SK-N-SH (cell line): ENCODE measurements at regions of chr22 and their contacts with region 1.

Region 1: DNA sequence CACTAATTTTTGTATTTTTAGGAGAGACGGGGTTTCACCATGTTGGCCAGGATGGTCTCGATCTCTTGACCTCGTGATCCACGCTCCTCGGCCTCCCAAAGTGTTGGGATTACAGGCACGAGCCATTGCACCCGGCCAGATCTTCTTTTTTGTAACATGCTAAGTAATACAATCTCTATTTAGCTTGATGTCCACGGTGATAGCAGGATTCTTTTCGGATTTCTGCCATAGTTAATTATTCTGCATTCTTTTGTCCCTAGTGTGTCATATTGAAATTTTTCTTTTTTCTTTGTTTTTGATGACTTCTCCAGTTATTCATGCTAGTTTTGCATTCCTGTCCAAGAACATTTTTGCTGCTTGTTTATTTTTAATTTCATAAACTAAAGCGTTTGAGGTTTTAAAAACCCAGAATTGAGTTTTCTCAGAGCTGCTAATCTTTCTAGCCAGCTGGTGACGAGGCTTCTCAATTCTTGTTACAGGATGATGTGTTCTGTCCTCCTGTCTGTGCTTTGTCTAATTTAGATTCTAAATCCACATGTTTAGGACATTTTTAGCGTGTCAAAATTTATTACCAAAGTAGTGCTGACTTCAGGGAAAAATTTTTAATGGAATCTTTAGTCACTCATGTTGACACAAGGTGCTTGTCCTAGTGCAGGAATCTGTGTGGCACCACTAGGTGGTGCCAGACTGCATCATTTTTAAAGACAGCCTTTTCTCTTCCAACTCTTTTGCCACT is 21.8 kb downstream of the NF2 start:
- DNase-seq: peak; percentile 49
- H3K4me3 ChIP-seq: peak overlapping the region in 1 of 2 experiments; percentile 15; a peak in 1 of 4 replicates
- H3K27ac ChIP-seq: peak overlapping the region; percentile 24 to 93; a peak in 3 of 4 replicates
- H3K4me1 ChIP-seq: peaks cover 5 to 59% of the 10 kb centered on the region in 2 experiments; a peak in 3 of 4 replicates
- H3K27me3 ChIP-seq: no peaks in the 10 kb centered on the region
- CTCF ChIP-seq: peak; percentile 96
- EP300 ChIP-seq: no peak
- RAD21 ChIP-seq: peak; percentile 71

Region 2: DNA sequence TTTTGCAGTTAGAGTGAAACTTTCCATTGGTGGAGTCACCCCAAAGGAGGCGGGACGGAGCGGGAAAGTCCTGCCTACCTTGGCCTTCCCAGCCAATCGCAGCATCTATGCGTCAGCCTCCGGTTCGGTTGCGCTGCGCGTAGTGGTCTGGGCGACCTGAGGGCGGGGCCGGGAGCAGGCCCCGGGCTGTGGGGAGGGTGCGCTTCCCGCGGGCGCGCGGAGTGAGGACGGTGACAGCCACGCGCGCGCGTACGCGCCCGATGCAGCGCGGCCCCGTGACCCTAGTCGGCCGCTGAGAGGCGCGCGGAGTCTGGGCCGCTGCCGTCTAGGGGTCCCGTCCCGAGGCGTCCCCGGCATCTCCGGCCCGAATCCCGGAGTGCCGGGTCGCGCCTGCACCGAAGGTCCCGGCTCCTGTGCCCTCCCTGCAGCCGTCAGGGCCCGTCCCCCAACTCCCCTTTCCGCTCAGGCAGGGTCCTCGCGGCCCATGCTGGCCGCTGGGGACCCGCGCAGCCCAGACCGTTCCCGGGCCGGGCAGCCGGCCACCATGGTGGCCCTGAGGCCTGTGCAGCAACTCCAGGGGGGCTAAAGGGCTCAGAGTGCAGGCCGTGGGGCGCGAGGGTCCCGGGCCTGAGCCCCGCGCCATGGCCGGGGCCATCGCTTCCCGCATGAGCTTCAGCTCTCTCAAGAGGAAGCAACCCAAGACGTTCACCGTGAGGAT is 21.7 kb before region 1 on chr22 and contains the start of gene NF2:
- CTCF ChIA-PET with region 1: interaction called, 35 read pairs
- POLR2A ChIA-PET with region 1: no interaction called
- DNase-seq: peak; percentile 99
- H3K4me3 ChIP-seq: peak within 1 kb of the TSS; percentile 75 to 77
- H3K27ac ChIP-seq: peak within 1 kb of the TSS; percentile 73 to 79
- H3K4me1 ChIP-seq: peaks cover 3 to 11% of the 10 kb centered on the region in 2 experiments; a peak in 2 of 4 replicates
- H3K27me3 ChIP-seq: no peaks in the 10 kb centered on the region
- CTCF ChIP-seq: peak; percentile 20; the same call in 1 of the 2 replicates
- EP300 ChIP-seq: peak in 1 of 2 experiments; percentile 25; a peak in 1 of 4 replicates
- RAD21 ChIP-seq: no peak
- polyA plus RNA-seq, gene NF2: 43.8 and 44.1 TPM in 2 replicates

Region 3: GRCh38 chr22:29609139-29609538 is 16.1 kb before region 1 on chr22:
- CTCF ChIA-PET with region 1: interaction called, 35 read pairs
- POLR2A ChIA-PET with region 1: interaction called, 4 read pairs
- DNase-seq: no peak
- H3K4me3 ChIP-seq: no peak overlapping the region
- H3K27ac ChIP-seq: no peak overlapping the region
- H3K4me1 ChIP-seq: peaks cover 3 to 11% of the 10 kb centered on the region in 2 experiments; a peak in 2 of 4 replicates
- H3K27me3 ChIP-seq: no peaks in the 10 kb centered on the region
- CTCF ChIP-seq: no peak; the same call in 1 of the 2 replicates
- EP300 ChIP-seq: no peak
- RAD21 ChIP-seq: no peak

Region 4: GRCh38 chr22:29635734-29636357 is 10.6 kb after region 1 on chr22:
- CTCF ChIA-PET with region 1: interaction called, 29 read pairs
- POLR2A ChIA-PET with region 1: no interaction called
- DNase-seq: peak; percentile 60
- H3K4me3 ChIP-seq: no peak overlapping the region; a peak in 1 of 4 replicates
- H3K27ac ChIP-seq: no peak overlapping the region
- H3K4me1 ChIP-seq: peaks cover 0 to 19% of the 10 kb centered on the region in 2 experiments; a peak in 2 of 4 replicates
- H3K27me3 ChIP-seq: no peaks in the 10 kb centered on the region
- CTCF ChIP-seq: peak; percentile 79
- EP300 ChIP-seq: no peak
- RAD21 ChIP-seq: peak; percentile 91

Region 5: DNA sequence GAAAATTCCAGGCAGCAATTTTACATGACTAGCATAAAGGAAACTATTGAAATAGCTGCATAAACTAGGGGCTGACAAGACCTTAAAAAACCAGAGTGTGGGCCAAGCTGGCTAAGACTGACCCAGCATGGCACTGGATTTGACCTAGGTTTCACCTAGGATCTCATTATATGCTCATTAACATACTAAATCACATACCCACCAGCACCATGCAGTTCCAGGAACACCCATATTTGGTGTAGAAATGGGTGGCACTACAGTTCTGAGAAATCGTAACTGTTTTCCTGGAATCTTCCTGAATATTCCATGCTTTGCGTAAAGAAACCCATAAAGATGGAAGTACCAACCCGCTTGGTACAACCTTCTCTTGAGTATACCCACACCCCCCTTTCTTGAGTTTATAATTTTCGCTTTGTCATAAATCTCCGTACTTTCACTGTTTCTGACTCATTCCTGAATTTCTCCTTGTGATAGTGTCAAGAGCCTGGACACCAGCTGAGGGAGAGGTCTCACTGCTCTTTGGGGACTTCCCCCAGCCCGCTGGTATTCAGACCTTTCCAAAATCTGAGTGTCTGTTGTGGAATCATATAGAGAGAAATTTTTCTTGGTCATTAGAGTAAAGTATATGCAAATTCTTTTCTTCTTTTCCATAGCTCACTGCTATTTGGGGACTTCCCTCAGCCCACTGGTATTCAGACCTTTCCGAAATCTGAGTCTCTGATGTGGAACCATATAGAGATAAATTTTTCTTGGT is 312.9 kb after region 1 on chr22:
- CTCF ChIA-PET with region 1: no interaction called
- POLR2A ChIA-PET with region 1: no interaction called
- DNase-seq: no peak
- H3K4me3 ChIP-seq: no peak overlapping the region
- H3K27ac ChIP-seq: no peak overlapping the region
- H3K4me1 ChIP-seq: no peaks in the 10 kb centered on the region
- H3K27me3 ChIP-seq: no peaks in the 10 kb centered on the region
- CTCF ChIP-seq: no peak
- EP300 ChIP-seq: no peak
- RAD21 ChIP-seq: no peak